ENCODE measurements at regions of chr10 and their contacts with region 1.

Region 1: DNA sequence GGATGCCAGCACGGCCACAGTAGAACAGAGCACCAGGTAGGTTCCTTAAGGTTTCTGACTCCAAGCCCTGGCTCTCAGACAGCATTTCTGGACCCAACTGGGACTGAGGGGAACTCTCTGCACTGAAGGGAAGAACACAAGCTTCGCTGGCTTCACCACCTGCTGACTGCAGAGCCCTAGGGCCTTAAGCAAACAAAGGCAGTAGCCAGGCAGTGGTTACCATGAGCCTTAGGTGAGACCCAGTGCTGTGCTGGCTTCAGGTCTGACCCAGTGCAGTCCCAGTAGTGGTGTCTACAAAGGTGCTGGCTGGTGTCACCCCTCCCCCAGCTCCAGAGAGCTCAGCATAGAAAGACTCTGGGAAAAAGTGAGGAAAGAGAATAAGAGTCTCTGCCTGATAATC is 59.5 kb downstream of the SIRT1 start:
- DNase-seq: no peak
- ATAC-seq: no peak
- H3K4me3 ChIP-seq: no peak overlapping the region
- H3K27ac ChIP-seq: no peak overlapping the region
- H3K4me1 ChIP-seq: no peaks in the 10 kb centered on the region
- H3K27me3 ChIP-seq: no peaks in the 10 kb centered on the region
- CTCF ChIP-seq: no peak
- POLR2A ChIP-seq: no peak

Region 2: DNA sequence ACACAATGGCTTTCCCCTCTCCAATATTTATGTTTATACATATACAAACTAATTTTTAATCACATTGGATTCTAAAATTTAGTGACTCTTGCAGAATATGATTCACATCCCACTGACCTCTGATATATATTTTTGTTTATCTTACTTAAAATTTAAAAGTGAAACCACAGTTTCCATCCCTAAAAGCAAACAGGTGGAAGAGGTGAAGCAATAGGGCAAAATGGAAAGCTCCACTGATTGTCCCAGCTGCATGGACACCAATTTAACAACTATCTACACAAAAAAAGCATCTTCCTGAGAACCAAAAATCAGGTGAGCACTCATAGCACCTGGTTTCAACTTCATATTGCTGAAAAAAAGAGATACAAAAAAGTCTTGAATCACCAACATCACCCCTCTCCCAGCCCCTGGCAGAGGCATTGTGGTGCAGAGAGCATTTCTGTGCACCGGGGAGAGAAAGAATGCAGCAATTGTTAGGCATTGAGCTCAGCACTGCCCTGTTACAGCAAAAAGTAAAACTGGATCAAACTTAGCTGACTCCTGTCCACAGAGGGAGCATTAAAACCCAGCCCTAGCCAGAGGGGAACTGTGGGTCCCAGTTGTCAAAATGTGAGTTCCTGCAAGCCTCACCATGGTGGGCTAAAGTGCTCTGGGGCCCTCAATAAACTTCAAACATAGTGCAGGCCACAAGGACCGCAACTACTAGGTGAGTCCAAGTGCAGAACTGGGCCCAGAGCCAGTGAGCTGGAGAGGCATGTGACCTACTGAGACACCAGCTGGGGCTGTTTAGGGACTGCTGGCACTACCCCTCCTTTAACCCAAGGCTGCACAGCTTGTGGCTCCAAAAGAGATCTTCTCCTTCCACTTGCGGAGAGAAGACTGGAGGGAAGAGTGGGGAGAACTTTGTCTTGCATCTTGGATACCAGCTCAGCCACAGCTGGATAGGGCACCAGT is 32.7 kb after region 1 on chr10:
- intact Hi-C with region 1: loop called in 1 of 10 experiments (anchors 2 kb)
- DNase-seq: peak; percentile 67 to 90 (median 81)
- ATAC-seq: peak; percentile 94 to 96 (median 96)
- H3K4me3 ChIP-seq: no peak overlapping the region
- H3K27ac ChIP-seq: peak overlapping the region in 7 of 12 donors; percentile 28 to 58 (median 53)
- H3K4me1 ChIP-seq: peaks cover 0 to 25% (median 13%) of the 10 kb centered on the region in 12 donors
- H3K27me3 ChIP-seq: no peaks in the 10 kb centered on the region
- CTCF ChIP-seq: no peak
- POLR2A ChIP-seq: no peak

Region 3: GRCh38 chr10:68074775-68075549 is 131.1 kb after region 1 on chr10 and contains the start of gene HERC4:
- intact Hi-C with region 1: no loop called
- DNase-seq: peak; percentile 96 to 97 (median 97)
- ATAC-seq: peak; percentile 99
- H3K4me3 ChIP-seq: peak within 1 kb of the TSS; percentile 77 to 97 (median 92)
- H3K27ac ChIP-seq: peak within 1 kb of the TSS; percentile 86 to 100 (median 98)
- H3K4me1 ChIP-seq: peaks cover 8 to 39% (median 33%) of the 10 kb centered on the region in 12 donors
- H3K27me3 ChIP-seq: no peaks in the 10 kb centered on the region
- CTCF ChIP-seq: no peak
- POLR2A ChIP-seq: peak in 1 of 2 donors; percentile 68
- total RNA-seq, gene HERC4: 16.6 to 39.4 (median 30.6) TPM

Measured in heart left ventricle (tissue), 16 donors.